ENCODE measurements at regions of chr19 and their contacts with region 1.

Region 1: GRCh38 chr19:58499021-58499927 is 12.5 kb downstream of the SLC27A5 start:
- DNase-seq: peak; percentile 92 to 97
- H3K4me3 ChIP-seq: peak overlapping the region; percentile 88
- H3K27ac ChIP-seq: no peak overlapping the region
- H3K4me1 ChIP-seq: no peaks in the 10 kb centered on the region
- H3K27me3 ChIP-seq: no peaks in the 10 kb centered on the region
- CTCF ChIP-seq: no peak

Region 2: DNA sequence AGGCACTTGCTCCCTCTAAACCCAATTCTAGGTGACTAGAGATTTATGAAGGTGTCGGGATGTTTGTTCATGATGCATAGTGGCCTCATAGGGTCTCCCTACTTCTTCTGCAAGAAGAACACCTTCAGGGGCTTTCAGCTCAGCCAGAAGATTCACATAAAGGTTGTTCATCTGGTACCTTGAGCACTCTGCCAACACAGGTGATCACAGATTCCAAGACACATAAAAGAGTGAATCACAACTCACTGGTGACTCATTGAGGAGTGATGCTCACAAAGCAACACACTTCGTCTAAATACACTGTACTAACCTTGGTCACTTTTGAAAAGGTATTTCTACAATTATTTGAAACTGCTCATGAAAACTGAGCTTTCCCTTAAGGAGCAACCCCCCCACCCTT is 39.2 kb before region 1 on chr19:
- CTCF ChIA-PET with region 1: no interaction called
- POLR2A ChIA-PET with region 1: no interaction called
- intact Hi-C with region 1: no loop called
- DNase-seq: no peak
- H3K4me3 ChIP-seq: no peak overlapping the region
- H3K27ac ChIP-seq: no peak overlapping the region
- H3K4me1 ChIP-seq: no peaks in the 10 kb centered on the region
- H3K27me3 ChIP-seq: no peaks in the 10 kb centered on the region
- CTCF ChIP-seq: no peak

Region 3: DNA sequence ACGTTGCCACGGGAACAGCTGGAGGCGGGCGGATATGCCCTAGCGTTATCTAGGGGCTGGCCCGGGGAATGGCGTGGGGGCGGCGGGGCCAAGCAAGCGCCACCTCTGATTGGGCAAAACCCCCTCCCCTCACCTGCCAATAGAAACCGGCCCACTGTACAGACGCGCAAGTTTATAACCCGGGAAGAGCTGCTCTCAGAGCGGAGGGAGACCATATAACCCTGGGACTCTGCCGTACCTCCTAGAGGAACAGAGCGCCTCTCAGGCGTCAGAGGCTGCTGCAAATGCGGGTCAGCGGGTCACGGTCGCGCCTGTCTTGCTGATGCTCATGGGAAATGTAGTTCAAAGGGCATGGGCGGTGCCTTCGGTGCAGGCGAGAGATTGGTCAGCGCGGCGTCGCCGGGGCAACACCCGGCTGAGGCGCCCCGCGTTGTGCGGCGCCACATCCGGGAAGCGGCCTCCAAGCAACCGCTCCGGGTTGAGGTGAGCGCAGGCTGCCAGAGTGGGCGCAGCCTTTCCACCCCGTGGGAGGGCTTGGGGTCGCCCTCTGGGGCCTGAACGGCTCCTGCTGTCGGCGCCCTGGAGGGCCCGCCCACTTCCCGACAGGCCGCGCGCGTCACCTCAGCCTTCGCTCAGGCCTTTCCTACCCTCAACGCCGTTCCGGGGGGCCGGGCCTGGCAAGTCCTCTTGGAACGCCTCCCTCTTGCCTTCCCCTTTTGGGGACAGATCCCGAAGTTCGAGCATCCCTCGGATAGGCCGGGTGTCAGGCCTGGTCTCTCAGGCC is 23.4 kb before region 1 on chr19 and contains the start of gene ZNF446:
- CTCF ChIA-PET with region 1: no interaction called
- POLR2A ChIA-PET with region 1: no interaction called
- intact Hi-C with region 1: loop called (anchors 1 kb)
- DNase-seq: peak; percentile 84 to 90
- H3K4me3 ChIP-seq: peak within 1 kb of the TSS; percentile 68
- H3K27ac ChIP-seq: peak within 1 kb of the TSS; percentile 51
- H3K4me1 ChIP-seq: peaks cover 18% of the 10 kb centered on the region; the same call in 1 of the 2 replicates
- H3K27me3 ChIP-seq: no peaks in the 10 kb centered on the region
- CTCF ChIP-seq: no peak
- total RNA-seq, gene ZNF446: 11.0 and 16.5 TPM in 2 replicates

Measured in PC-9 (cell line).